ENCODE measurements at regions of chr6 and their contacts with region 1.

Region 1: GRCh38 chr6:4155848-4156466 is 20.6 kb upstream of the ECI2 start:
- DNase-seq: peak; percentile 84 to 89 (median 86)
- ATAC-seq: peak; percentile 89
- H3K4me3 ChIP-seq: no peak overlapping the region
- H3K27ac ChIP-seq: no peak overlapping the region
- H3K4me1 ChIP-seq: peaks cover 5% of the 10 kb centered on the region
- H3K27me3 ChIP-seq: no peaks in the 10 kb centered on the region
- CTCF ChIP-seq: peak; percentile 73 to 91 (median 85)
- POLR2A ChIP-seq: no peak

Region 2: DNA sequence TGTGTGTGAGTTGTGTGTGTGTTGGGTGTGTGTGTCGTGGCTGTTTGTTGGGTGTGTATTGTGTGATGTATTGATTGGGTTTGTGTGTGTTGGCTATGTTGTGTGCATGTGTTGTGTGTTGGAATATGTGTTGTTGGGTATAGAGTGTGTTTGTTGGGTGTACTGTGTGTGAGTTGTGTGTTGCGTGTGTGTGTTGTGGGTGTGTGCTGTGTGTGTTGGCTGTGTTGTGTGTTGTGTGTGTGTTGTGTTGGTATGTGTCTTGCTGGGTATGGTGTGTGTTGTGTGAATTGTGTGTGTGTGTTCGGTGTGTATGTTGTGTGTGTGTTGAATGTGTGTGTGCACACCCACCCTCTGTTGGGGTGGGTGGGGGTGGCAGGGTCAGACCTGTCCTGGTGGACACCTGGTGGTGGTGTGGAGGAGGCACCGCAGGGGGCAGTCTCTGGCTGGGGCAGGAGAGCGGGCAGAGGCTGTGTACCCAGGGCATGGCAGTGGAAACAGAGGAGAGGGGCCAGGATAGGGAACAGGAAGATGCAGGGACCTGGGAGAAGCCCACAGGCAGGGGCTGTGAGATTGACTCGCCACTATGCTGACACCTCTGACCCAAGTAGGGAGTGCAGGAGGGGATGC is 379.0 kb before region 1 on chr6:
- intact Hi-C with region 1: no loop called
- DNase-seq: no peak
- ATAC-seq: no peak
- H3K4me3 ChIP-seq: no peak overlapping the region
- H3K27ac ChIP-seq: no peak overlapping the region
- H3K4me1 ChIP-seq: no peaks in the 10 kb centered on the region
- H3K27me3 ChIP-seq: no peaks in the 10 kb centered on the region
- CTCF ChIP-seq: no peak
- POLR2A ChIP-seq: no peak

Region 3: GRCh38 chr6:4039348-4039747 is 116.6 kb before region 1 on chr6:
- intact Hi-C with region 1: no loop called
- DNase-seq: no peak
- ATAC-seq: no peak
- H3K4me3 ChIP-seq: no peak overlapping the region
- H3K27ac ChIP-seq: no peak overlapping the region
- H3K4me1 ChIP-seq: no peaks in the 10 kb centered on the region
- H3K27me3 ChIP-seq: no peaks in the 10 kb centered on the region
- CTCF ChIP-seq: no peak
- POLR2A ChIP-seq: no peak

Region 4: DNA sequence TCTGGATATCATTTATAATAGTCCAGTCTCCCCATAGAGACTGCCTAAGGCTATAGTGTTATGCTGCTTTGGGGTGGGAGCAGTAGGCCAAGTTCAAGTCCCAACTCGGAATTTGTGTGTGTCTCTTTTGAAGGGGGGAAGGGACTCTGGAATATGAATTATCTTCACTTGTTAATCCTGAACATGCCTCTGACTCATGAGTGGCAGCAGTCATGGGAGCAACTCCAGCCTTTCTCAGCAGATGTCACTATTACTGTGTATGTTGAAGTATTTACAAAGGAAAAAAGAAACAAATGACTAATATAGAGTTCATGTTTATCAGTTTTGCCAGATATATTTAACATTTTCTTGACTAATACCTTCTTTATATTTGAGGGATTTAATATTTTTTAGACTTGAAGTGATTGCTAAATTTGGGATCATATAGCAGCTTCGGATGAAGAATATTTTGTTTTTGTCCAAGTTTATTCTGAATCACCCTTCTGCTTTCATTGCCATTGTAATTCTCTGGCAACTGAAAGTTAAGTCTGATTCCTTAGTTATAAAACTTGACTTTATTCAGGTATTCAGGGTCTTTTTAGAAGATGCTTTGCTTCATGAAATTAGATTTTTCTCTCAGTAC is 100.4 kb before region 1 on chr6:
- intact Hi-C with region 1: loop called (anchors 2 kb)
- DNase-seq: peak; percentile 52 to 71 (median 59)
- ATAC-seq: peak; percentile 58
- H3K4me3 ChIP-seq: no peak overlapping the region
- H3K27ac ChIP-seq: no peak overlapping the region
- H3K4me1 ChIP-seq: peaks cover 10% of the 10 kb centered on the region
- H3K27me3 ChIP-seq: no peaks in the 10 kb centered on the region
- CTCF ChIP-seq: peak in 6 of 7 experiments; percentile 25 to 75 (median 66)
- POLR2A ChIP-seq: no peak

Region 5: DNA sequence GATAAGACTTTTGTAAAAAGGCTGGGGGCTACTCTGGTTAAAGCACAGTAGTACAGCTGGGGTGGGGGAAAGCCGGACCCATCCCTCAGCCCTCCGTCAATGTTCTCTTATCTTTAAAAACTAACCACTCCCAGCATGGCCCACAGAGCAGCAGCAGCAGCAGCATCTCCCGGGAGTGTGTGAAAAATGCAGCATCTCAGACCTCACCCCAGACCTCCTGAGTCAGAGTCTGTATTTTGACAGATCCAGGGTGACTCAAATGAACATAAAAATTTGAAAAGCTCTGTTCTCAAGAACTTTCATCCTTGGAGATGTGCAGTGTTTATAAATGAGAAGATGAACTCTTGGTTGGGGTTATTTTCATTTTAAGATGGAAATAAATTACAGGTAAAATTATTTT is 257.1 kb after region 1 on chr6:
- intact Hi-C with region 1: no loop called
- DNase-seq: no peak
- ATAC-seq: no peak
- H3K4me3 ChIP-seq: no peak overlapping the region
- H3K27ac ChIP-seq: no peak overlapping the region
- H3K4me1 ChIP-seq: no peaks in the 10 kb centered on the region
- H3K27me3 ChIP-seq: no peaks in the 10 kb centered on the region
- CTCF ChIP-seq: no peak
- POLR2A ChIP-seq: no peak

Measured in body of pancreas (tissue), 4 donors.